ENCODE measurements at regions of chr11 and their contacts with region 1.

Region 1: GRCh38 chr11:63536669-63537292 is at the start of gene PLAAT4:
- DNase-seq: peak; percentile 32
- H3K4me3 Mint-ChIP-seq: peak within 1 kb of the TSS; percentile 80
- H3K27ac Mint-ChIP-seq: peak within 1 kb of the TSS; percentile 74
- H3K4me1 Mint-ChIP-seq: peaks cover 62% of the 10 kb centered on the region
- H3K27me3 Mint-ChIP-seq: no peaks in the 10 kb centered on the region
- total RNA-seq, gene PLAAT4: 41.4 and 45.7 TPM in 2 replicates

Region 2: DNA sequence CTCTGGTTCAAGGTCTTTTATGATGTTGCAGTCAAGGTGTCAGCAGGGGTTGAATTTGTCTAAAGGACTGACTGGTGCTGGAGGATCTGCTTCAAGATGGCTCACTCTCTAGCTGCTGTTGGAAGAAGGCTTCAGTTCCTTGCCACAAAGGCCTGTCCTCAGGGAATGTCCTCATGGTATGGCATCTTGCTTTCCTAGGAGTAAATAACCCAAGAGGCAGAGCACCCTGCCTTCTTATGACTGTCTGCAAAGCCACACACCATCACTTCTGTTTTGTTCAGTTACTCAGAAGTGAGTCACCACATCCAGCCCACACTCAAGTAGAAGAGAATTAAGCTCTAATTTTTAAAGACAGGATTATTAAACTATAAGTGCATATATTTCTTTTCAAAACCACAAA is 91.1 kb before region 1 on chr11:
- intact Hi-C with region 1: loop called (anchors 5 kb)
- DNase-seq: no peak
- H3K4me3 Mint-ChIP-seq: no peak overlapping the region
- H3K27ac Mint-ChIP-seq: peak overlapping the region; percentile 60
- H3K4me1 Mint-ChIP-seq: peaks cover 41% of the 10 kb centered on the region
- H3K27me3 Mint-ChIP-seq: peaks cover 7% of the 10 kb centered on the region

Region 3: DNA sequence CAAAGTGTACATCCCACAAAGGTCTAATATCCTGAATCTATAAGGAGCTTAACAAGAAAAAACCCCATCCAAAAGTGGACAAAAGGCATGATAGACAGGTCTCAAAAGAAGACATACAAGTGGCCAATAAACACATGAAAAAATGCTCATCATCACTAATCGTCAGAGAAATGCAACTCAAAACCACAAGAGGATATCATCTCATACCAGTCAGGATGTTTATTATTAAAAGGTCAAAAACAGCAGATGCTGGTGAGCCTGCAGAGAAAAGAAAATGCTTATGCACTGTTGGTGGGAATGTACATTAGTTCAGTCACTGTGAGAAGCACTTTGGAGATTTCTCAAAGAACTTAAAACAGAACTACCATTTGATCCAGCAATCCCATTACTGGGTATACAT is 18.2 kb before region 1 on chr11:
- intact Hi-C with region 1: no loop called
- DNase-seq: no peak
- H3K4me3 Mint-ChIP-seq: no peak overlapping the region
- H3K27ac Mint-ChIP-seq: peak overlapping the region; percentile 33
- H3K4me1 Mint-ChIP-seq: peaks cover 10% of the 10 kb centered on the region
- H3K27me3 Mint-ChIP-seq: peaks cover 19% of the 10 kb centered on the region

Region 4: GRCh38 chr11:63553741-63554151 is 17.0 kb after region 1 on chr11:
- intact Hi-C with region 1: loop called (anchors 1 kb)
- DNase-seq: peak; percentile 39
- H3K4me3 Mint-ChIP-seq: peak overlapping the region; percentile 63
- H3K27ac Mint-ChIP-seq: peak overlapping the region; percentile 89
- H3K4me1 Mint-ChIP-seq: peaks cover 44% of the 10 kb centered on the region
- H3K27me3 Mint-ChIP-seq: no peaks in the 10 kb centered on the region

Region 5: DNA sequence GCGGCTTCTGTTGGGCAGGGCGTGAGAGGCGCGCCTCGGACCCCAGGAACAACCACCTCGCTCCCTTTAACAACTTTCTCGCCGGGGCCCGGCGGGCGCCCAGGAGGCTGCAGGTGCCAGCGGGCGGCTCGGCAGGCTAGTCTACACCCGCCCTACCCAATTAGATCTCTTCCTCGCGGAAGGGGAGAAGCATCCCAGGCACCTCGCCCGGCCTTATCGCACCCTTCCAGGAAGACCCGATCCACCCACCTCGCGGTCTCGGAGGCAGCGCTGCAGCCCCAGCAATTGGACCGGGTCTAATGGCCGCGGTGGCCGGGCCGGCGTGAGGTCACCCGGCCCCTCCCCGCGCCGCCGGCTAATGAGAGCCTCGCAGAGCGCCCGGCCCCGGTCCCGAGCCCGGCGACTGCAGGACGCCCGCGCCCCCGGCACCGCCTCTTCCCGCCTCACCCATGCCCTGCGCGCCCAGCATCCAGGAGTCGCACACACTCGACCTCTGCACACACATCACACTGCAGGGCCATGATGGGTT is 77.4 kb after region 1 on chr11 and contains the start of gene PLAAT3:
- intact Hi-C with region 1: loop called (anchors 5 kb)
- DNase-seq: no peak
- H3K4me3 Mint-ChIP-seq: peak within 1 kb of the TSS; percentile 77
- H3K27ac Mint-ChIP-seq: no peak within 1 kb of the TSS
- H3K4me1 Mint-ChIP-seq: peaks cover 9% of the 10 kb centered on the region
- H3K27me3 Mint-ChIP-seq: peaks cover 27% of the 10 kb centered on the region
- total RNA-seq, gene PLAAT3: 15.2 and 17.3 TPM in 2 replicates

Region 6: GRCh38 chr11:63671322-63672155 is 134.8 kb after region 1 on chr11 and contains the start of gene ATL3:
- intact Hi-C with region 1: loop called (anchors 5 kb)
- DNase-seq: peak; percentile 89
- H3K4me3 Mint-ChIP-seq: peak within 1 kb of the TSS; percentile 86
- H3K27ac Mint-ChIP-seq: peak within 1 kb of the TSS; percentile 80
- H3K4me1 Mint-ChIP-seq: peaks cover 27% of the 10 kb centered on the region
- H3K27me3 Mint-ChIP-seq: no peaks in the 10 kb centered on the region
- total RNA-seq, gene ATL3: 38.6 and 38.8 TPM in 2 replicates